ENCODE measurements at regions of chr15 and their contacts with region 1.

Region 1: DNA sequence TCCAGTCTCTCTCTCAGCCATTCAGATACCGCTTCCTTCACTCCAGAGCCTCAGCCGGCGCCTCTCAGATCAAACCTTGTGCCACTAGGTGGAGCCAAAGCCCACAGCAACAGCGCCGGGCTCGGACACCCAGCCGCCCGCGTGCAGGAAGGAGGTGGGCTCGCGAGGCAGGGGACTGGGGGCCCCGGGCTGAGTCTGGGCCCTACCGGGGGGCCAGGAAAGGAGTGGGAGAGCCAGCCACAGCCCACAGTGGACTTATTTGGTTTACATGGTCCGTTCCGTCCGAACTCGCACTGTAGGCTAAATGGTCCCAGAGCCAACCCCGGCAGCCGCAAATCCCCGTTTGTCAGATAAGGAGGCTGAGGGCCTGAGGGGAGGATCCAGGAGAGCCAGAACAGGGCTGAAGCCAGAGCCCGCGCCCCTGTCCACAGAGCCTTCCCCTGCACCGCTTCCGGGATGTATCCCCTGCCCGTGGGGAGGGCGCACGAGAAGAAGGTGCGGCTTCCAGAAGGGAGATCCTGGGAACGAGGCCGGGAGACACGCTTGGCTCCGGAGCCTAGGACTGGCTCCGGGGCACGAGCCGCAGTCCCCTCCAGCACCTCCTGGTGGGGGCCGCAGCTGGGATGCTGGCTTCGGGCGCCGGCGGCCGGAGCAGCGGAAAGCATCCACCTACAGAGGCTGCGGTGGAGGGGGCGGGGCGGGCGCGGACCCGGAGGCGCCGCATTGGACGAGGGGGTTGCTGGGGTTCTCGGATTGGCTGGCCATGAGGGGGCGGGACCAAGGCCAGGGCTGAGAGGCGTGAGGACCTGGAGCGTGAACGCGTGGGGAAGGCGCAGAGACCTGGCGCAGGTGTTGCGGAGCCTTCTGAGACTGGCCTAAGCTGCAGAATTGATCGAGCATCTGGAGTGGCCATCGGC is 6.5 kb upstream of the CYP11A1 start:
- DNase-seq: peak; percentile 94 to 97 (median 96)
- H3K4me3 ChIP-seq: peak overlapping the region in 3 of 4 donors; percentile 24 to 71 (median 39)
- H3K27ac ChIP-seq: peak overlapping the region; percentile 1 to 76 (median 55)
- H3K4me1 ChIP-seq: peaks cover 7 to 19% of the 10 kb centered on the region in 2 donors
- H3K27me3 ChIP-seq: no peaks in the 10 kb centered on the region
- CTCF ChIP-seq: peak; percentile 80 to 90 (median 86)
- POLR2A ChIP-seq: peak in 1 of 2 donors; percentile 32

Region 2: GRCh38 chr15:74202452-74203428 is 171.2 kb before region 1 on chr15 and contains the start of gene STRA6:
- intact Hi-C with region 1: no loop called
- DNase-seq: peak in 1 of 7 donors; percentile 72
- H3K4me3 ChIP-seq: no peak within 1 kb of the TSS
- H3K27ac ChIP-seq: peak within 1 kb of the TSS in 2 of 5 donors; percentile 38 to 44
- H3K4me1 ChIP-seq: peaks cover 8 to 10% of the 10 kb centered on the region in 2 donors
- H3K27me3 ChIP-seq: no peaks in the 10 kb centered on the region
- CTCF ChIP-seq: no peak
- POLR2A ChIP-seq: no peak
- total RNA-seq, gene STRA6: 0.22 to 12.6 (median 3.1) TPM in 7 of 9 donors, not detected in the others

Region 3: DNA sequence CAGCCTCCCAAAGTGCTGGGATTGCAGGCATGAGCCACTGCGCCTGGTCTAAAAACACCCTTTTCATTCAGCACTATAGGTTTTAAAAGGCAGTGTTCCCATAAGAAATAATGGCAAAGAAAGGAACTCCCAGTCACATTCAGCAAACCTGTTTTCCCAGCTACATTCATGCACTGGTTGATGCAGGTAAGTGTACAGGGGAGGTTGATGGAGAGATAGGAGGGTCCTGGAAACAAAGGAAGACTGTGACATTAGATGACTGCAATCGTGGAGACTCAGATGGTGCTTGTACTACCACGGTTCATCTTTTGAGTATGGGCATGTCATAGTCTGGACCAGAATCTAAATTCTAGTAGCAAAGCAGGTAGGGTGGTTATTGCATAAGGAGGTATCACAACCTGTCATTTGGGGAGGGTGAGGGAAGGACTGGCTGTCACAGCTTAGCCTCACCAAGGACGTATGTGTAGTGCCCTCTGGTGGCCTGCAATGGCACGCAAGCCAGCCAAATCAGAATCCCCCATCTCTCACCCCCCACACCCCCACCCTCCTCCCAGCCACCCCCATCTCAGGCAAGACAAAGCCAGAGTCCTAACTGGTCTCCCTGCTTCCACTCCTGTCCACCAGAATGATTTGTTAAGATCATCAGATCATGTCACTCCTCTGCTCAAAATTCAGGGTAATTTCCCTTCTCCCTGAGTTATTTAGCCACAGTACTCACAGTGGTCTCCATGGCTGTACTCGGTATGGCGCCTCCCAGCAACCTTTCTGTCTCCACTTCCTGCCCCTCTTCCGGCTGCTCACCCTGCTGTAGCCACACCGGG is 115.7 kb after region 1 on chr15:
- intact Hi-C with region 1: loop called in 1 of 2 experiments (anchors 5 kb)
- DNase-seq: peak; percentile 31 to 65 (median 41)
- H3K4me3 ChIP-seq: no peak overlapping the region
- H3K27ac ChIP-seq: no peak overlapping the region
- H3K4me1 ChIP-seq: no peaks in the 10 kb centered on the region
- H3K27me3 ChIP-seq: no peaks in the 10 kb centered on the region
- CTCF ChIP-seq: peak; percentile 24 to 59 (median 47)
- POLR2A ChIP-seq: no peak

Region 4: GRCh38 chr15:74620636-74621545 is 246.9 kb after region 1 on chr15:
- intact Hi-C with region 1: loop called in 1 of 2 experiments (anchors 10 kb)
- DNase-seq: peak; percentile 85 to 95 (median 93)
- H3K4me3 ChIP-seq: no peak overlapping the region
- H3K27ac ChIP-seq: peak overlapping the region in 1 of 5 donors; percentile 65
- H3K4me1 ChIP-seq: peaks cover 18 to 37% of the 10 kb centered on the region in 2 donors
- H3K27me3 ChIP-seq: no peaks in the 10 kb centered on the region
- CTCF ChIP-seq: peak; percentile 73 to 97 (median 90)
- POLR2A ChIP-seq: no peak

Measured in adrenal gland (tissue), 19 donors.